GM12878 (cell line): ENCODE measurements at regions of chr10 and their contacts with region 1.

Region 1: DNA sequence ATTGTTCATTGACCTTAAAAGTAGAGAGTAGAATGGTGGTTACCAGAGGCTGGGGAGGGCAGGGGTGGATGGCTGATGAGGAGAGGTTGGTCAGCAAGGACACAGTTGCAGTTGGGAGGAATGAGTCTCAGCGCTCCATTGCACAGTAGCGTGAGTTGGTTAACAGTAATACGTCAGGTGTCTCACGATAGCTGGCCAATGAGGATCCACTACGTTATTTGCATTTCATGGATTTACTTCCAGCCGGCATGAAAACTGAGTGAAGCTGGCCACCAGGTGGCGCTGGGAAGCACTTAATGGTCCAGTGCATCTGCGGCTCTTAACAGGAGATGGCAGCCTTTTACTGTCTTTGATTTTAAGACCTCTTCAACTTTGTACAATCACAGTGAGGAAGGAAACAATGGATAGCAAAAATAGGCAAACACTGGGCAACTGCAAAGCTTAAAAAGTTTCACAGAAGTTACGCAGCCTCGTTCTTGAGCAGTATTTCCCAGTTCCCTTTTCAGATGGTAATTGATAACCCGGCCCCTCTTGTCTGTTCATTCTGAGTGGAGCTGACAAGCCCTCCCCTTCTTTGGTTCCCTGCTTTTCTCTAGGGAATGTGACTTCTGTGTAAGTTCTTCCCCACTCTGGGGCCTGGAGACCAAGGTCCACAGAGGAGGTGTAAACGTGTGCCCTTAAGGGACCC is 23.7 kb downstream of the AKR1E2 start:
- DNase-seq: peak; percentile 37
- ATAC-seq: peak; percentile 97
- H3K4me3 ChIP-seq: no peak overlapping the region
- H3K27ac ChIP-seq: no peak overlapping the region
- H3K4me1 ChIP-seq: no peaks in the 10 kb centered on the region; the same call in 1 of the 2 replicates
- H3K27me3 ChIP-seq: no peaks in the 10 kb centered on the region
- CTCF ChIP-seq: peak; percentile 84 to 100 (median 99); a peak in 5 of 6 replicates
- EP300 ChIP-seq: peak in 1 of 2 experiments; percentile 12; a peak in 1 of 4 replicates
- POLR2A ChIP-seq: no peak
- RAD21 ChIP-seq: peak; percentile 81

Region 2: DNA sequence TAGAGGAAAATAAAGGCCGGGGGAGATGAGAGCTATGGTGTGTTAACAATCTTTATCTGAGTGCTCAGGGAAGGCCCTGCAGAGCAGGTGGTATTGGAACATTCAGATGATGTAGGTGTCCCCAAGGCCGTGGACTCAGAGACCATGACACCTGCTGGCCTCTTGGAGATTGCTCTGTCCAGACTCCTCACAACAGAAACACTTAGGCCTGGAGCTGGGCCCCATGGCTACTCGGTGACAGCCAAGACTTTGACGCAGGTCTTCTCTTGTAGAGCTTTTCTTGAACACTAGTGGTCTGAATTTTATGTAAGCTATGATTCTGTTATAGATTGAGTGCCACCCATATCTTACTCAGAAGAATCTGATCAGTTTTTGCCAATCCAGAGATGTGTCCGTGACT is 10.3 kb before region 1 on chr10:
- CTCF ChIA-PET with region 1: interaction called, 49 read pairs
- POLR2A ChIA-PET with region 1: no interaction called
- RAD21 ChIA-PET with region 1: no interaction called
- SMC1A ChIA-PET with region 1: interaction called, 5 read pairs
- in situ Hi-C with region 1: no loop called
- intact Hi-C with region 1: no loop called
- DNase-seq: no peak
- ATAC-seq: no peak
- H3K4me3 ChIP-seq: no peak overlapping the region
- H3K27ac ChIP-seq: no peak overlapping the region
- H3K4me1 ChIP-seq: no peaks in the 10 kb centered on the region
- H3K27me3 ChIP-seq: no peaks in the 10 kb centered on the region; a peak in 1 of 4 replicates
- CTCF ChIP-seq: no peak
- EP300 ChIP-seq: no peak
- POLR2A ChIP-seq: no peak
- RAD21 ChIP-seq: no peak

Region 3: DNA sequence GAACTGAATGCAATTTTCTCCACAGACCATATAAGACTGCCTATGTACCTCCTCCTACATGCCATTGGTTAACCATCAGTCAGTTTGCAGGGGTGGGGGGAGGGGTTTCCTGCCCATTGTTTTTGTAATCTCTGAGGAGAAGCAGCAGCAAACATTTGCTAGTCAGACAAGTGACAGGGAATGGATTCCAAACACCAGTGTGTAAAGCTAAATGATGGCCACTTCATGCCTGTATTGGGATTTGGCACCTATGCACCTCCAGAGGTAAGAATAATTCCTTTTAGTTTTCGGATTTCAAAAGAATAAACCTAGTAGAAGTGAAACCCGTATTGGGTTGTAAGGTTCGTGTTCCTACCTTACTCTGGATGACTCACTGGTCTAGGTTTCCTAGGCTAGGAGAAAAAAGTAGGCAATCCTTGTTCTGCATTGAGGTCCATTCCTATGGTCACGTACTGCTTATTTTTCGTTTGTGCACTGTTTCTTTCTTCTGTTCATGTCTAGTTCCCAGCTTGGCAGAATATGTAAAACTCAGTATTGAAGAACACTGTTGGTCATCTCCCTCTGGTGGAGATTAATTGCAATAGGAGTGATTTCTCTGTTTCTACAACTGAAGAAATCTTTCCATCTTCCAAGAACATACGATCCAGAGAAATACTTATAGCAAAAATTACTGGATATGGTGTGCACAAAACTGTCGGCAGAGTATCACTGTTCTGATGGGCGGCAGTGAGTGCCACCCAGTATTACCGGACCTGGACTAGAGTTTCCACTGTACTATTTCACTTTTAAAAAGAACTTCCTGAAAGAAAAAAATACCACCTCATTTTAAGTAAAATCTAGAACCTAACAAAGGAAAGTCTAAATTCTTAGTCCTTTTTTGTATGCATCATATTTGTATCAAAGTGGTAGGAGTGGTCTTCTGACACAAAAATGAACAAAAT is 244.8 kb after region 1 on chr10 and contains the start of gene AKR1C3:
- CTCF ChIA-PET with region 1: interaction called, 6 read pairs
- POLR2A ChIA-PET with region 1: no interaction called
- RAD21 ChIA-PET with region 1: no interaction called
- SMC1A ChIA-PET with region 1: no interaction called
- in situ Hi-C with region 1: no loop called
- intact Hi-C with region 1: loop called (anchors 10 kb)
- DNase-seq: no peak
- ATAC-seq: 0 out of 3 replicates have a peak, but pooled peaks have one; percentile 21
- H3K4me3 ChIP-seq: no peak within 1 kb of the TSS
- H3K27ac ChIP-seq: no peak within 1 kb of the TSS
- H3K4me1 ChIP-seq: no peaks in the 10 kb centered on the region
- H3K27me3 ChIP-seq: no peaks in the 10 kb centered on the region
- CTCF ChIP-seq: peak; percentile 10 to 31 (median 11); a peak in 1 of 6 replicates
- EP300 ChIP-seq: no peak
- POLR2A ChIP-seq: no peak
- RAD21 ChIP-seq: 0 out of 2 replicates have a peak, but pooled peaks have one; percentile 23
- polyA plus RNA-seq, gene AKR1C3: not detected

Region 4: DNA sequence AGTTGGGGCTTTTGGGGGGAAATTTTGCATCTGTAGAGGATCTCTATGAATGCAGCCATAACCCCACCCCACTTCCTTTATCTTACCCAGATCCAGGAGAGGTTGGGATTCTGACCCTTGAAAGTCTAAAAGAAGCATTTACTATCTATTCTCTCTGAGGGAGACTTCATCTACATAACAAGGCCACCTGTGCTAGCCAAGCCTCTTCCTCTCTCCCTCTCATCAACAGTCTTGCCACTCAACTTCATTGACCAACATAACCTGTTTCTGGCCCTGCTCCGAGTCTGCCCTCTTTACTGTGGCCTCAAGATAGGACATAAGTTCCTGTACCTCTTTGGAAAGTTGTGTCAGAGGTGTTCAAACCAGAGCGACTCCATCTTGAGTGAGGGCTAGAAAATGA is 535.5 kb after region 1 on chr10:
- CTCF ChIA-PET with region 1: interaction called, 20 read pairs
- POLR2A ChIA-PET with region 1: no interaction called
- RAD21 ChIA-PET with region 1: interaction called, 5 read pairs
- SMC1A ChIA-PET with region 1: interaction called, 5 read pairs
- in situ Hi-C with region 1: loop called (anchors 5 kb)
- intact Hi-C with region 1: loop called (anchors 2 kb)
- DNase-seq: no peak
- ATAC-seq: no peak
- H3K4me3 ChIP-seq: no peak overlapping the region
- H3K27ac ChIP-seq: no peak overlapping the region
- H3K4me1 ChIP-seq: no peaks in the 10 kb centered on the region
- H3K27me3 ChIP-seq: no peaks in the 10 kb centered on the region; a peak in 1 of 4 replicates
- CTCF ChIP-seq: no peak
- EP300 ChIP-seq: no peak
- POLR2A ChIP-seq: no peak
- RAD21 ChIP-seq: no peak

Region 5: DNA sequence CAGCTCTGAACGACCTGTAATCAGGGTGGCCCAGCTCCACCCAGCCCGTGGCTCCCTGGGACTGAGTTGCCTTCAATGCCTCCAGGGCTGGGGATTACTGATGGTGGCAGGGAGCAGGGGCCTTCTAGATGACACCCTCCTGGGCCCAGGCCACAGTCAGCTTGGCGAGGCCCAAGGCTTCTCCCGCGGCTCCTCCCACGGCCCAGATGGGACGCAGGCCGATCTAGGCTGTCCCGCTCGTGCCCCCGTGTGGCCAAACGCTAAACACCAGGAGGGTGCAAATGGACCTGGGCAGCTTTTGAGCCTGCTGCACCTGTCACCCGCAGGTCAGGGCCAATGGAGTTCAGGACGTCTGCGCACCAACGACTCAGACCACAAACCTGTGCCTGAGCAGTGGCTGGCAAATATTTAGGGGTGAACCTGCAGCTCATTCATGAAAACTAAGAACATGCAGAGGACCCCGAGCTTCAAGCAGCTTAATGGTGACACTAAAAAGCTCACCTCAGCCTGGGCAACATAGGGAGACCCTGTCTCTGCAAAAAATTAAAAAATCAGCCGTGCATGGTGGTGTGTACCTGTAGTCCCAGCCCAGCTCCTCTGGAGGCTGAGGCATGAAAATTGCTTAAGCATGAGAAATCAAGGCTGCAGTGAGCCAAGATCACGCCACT is 773.5 kb after region 1 on chr10:
- CTCF ChIA-PET with region 1: interaction called, 9 read pairs
- POLR2A ChIA-PET with region 1: no interaction called
- RAD21 ChIA-PET with region 1: no interaction called
- SMC1A ChIA-PET with region 1: interaction called, 5 read pairs
- in situ Hi-C with region 1: loop called (anchors 10 kb)
- intact Hi-C with region 1: loop called (anchors 5 kb)
- DNase-seq: peak; percentile 23
- ATAC-seq: peak; percentile 99
- H3K4me3 ChIP-seq: no peak overlapping the region
- H3K27ac ChIP-seq: no peak overlapping the region
- H3K4me1 ChIP-seq: no peaks in the 10 kb centered on the region
- H3K27me3 ChIP-seq: peaks cover 2 to 9% of the 10 kb centered on the region in 2 experiments; a peak in 3 of 4 replicates
- CTCF ChIP-seq: peak; percentile 87 to 93 (median 89)
- EP300 ChIP-seq: no peak
- POLR2A ChIP-seq: no peak
- RAD21 ChIP-seq: peak; percentile 91

Region 6: DNA sequence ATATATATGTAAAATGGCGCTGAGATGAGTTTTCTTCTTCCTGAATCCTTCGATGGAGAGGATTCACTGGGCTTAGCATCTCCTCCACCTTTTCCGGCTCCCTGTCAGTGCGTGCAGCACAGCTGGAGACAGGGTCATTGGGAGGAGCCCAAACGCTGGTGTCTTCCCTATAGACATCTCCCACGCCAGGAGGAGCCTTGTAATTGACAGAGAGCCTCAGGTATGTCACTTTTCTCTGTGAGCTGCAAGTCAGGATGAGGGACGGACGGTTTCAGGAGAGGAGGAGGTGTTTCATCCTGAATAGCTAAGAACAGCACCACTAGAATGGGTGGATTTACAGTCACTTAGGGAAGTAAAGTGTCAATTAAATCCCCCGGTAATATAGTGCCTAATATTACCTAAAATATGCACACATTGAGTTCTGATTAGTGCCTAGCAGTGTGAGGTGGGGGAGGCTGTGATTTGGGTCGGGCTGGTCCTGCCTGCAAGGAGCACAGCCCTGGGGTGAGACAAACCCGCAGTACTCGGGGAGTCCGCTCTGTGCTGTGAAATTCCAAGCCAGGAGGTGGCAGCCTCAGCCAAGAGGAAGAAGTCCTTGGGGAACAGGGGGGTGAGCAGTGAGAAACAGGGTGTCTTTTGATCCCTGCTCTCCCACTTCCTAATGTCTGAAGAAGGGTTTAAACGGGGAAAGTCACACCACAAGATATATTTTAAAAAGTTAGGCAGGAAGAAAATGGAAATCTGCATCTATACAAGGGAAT is 1099.5 kb after region 1 on chr10:
- CTCF ChIA-PET with region 1: no interaction called
- POLR2A ChIA-PET with region 1: no interaction called
- RAD21 ChIA-PET with region 1: no interaction called
- SMC1A ChIA-PET with region 1: no interaction called
- in situ Hi-C with region 1: no loop called
- intact Hi-C with region 1: no loop called
- DNase-seq: no peak
- ATAC-seq: peak; percentile 72
- H3K4me3 ChIP-seq: no peak overlapping the region
- H3K27ac ChIP-seq: no peak overlapping the region
- H3K4me1 ChIP-seq: no peaks in the 10 kb centered on the region
- H3K27me3 ChIP-seq: no peaks in the 10 kb centered on the region
- CTCF ChIP-seq: peak; percentile 25 to 59 (median 44); a peak in 4 of 6 replicates
- EP300 ChIP-seq: no peak
- POLR2A ChIP-seq: no peak
- RAD21 ChIP-seq: peak; percentile 86